Tibial artery (tissue), 4 donors: ENCODE measurements at regions of chr18 and their contacts with region 1.

Region 1: DNA sequence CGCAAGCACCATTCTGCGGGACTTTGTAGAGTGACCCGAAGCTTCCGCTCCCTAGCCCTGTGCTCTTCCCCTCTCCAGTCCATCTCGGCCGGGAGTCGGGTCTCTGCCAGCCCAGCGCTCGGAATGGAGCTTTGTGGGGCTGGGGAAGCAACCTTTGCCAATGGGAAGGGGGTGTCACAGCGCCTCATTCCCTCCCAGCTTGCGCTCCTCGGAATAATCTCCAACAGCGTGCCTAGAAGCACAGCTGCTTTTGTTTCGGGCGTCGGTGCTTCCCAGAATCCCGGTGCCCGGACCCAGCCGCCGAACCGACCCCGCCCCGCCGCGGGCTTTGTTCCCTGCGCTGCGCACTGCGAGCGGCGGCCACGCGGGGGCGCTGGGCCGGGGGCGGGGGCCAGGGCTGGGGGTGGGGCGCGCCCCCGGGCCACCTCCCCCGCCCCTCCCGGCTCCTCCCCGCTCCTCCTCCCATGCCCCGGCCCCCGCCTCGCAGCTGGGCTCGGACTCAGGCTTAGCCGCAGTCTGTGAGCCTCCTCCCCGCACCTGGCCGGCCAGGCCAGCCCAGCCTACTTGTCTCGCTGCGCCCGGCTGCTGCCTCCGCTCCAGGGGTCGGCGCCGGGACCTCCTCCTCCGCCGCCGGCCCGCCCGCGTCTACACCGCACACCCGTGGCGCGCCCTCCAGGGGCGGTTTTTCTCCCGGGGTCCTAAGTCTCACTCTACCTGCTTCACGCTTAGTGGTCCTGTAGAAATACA is 77.7 kb upstream of the SMAD2 start:
- DNase-seq: peak in 1 of 2 donors; percentile 70
- H3K4me3 ChIP-seq: peak overlapping the region; percentile 48 to 56
- H3K27ac ChIP-seq: peak overlapping the region in 1 of 2 donors; percentile 40
- H3K4me1 ChIP-seq: peaks cover 0 to 24% (median 16%) of the 10 kb centered on the region in 4 donors
- H3K27me3 ChIP-seq: no peaks in the 10 kb centered on the region
- CTCF ChIP-seq: peak; percentile 35 to 54

Region 2: GRCh38 chr18:47863041-47863440 is 145.1 kb before region 1 on chr18:
- intact Hi-C with region 1: no loop called
- DNase-seq: no peak
- H3K4me3 ChIP-seq: no peak overlapping the region
- H3K27ac ChIP-seq: no peak overlapping the region
- H3K4me1 ChIP-seq: peaks cover 0 to 8% (median 0%) of the 10 kb centered on the region in 4 donors
- H3K27me3 ChIP-seq: no peaks in the 10 kb centered on the region
- CTCF ChIP-seq: no peak

Region 3: GRCh38 chr18:47930931-47931717 is 77.0 kb before region 1 on chr18:
- intact Hi-C with region 1: loop called (anchors 10 kb)
- DNase-seq: peak; percentile 96 to 98
- H3K4me3 ChIP-seq: peak overlapping the region; percentile 78 to 87
- H3K27ac ChIP-seq: peak overlapping the region; percentile 87 to 95
- H3K4me1 ChIP-seq: peaks cover 0 to 41% (median 14%) of the 10 kb centered on the region in 4 donors
- H3K27me3 ChIP-seq: no peaks in the 10 kb centered on the region
- CTCF ChIP-seq: no peak

Region 4: DNA sequence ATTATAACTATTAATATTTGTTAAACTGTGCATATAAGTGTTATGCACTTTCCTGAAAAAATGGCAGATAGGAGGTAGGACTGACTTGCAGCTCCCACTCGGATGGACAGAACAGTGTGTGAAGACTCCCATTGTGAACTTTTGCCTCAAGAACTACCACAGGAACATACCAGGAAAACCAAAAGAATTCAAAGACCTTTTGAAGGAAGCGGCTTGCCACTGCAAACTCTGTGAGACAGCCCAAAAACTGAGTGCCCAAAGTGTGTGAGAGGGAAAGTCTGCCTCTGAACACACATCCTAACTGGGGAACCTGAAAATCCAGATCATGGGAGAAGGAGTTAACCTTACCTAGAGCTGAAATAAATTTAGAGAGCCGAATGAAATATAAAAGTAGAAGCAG is 230.1 kb after region 1 on chr18:
- intact Hi-C with region 1: no loop called
- DNase-seq: no peak
- H3K4me3 ChIP-seq: no peak overlapping the region
- H3K27ac ChIP-seq: no peak overlapping the region
- H3K4me1 ChIP-seq: peaks cover 0 to 8% (median 0%) of the 10 kb centered on the region in 4 donors
- H3K27me3 ChIP-seq: no peaks in the 10 kb centered on the region
- CTCF ChIP-seq: no peak